CD4-positive, alpha-beta memory T cell (primary cell): ENCODE measurements at regions of chr3 and their contacts with region 1.

Region 1: DNA sequence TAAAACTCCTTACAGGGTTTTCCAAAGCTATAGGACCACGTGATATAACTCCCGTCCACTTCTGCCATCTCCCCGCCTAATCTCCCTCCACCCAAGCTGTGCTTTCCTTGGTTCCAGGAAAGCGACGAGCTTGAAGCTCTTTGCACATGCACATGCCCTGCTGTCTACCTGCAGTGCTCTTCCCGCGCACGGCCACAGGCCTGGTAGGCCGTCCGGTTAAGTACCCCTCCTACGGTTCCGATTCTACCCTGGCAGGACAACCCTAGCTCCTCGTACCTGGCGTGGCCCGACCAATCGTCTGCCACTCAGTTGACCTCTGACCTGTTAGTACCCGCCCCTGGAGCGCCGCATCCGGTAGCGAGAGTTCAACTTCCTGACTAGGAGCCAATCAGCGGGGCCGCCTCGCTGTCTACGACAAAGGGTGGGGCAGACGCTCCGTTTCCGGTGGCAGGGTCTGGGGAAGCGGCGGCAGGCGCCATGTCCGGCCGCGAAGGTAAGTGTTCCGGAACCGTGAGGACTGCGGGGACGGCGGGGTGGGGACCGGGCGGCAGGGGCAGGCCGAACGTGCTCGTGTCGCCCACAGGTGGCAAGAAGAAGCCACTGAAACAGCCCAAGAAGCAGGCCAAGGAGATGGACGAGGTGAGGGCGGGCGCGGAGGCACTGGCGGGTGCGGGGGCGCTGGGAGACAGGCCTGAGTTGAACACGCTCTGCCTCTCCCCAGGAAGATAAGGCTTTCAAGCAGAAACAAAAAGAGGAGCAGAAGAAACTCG is at the starts of genes CCDC51 and TMA7:
- DNase-seq: peak; percentile 96 to 99 (median 97)
- H3K4me3 ChIP-seq: peak within 1 kb of the TSS; percentile 93 to 95
- H3K4me3 Mint-ChIP-seq: peak within 1 kb of the TSS; percentile 86 to 99 (median 93)
- H3K27ac ChIP-seq: peak within 1 kb of the TSS; percentile 86
- H3K27ac Mint-ChIP-seq: peak within 1 kb of the TSS; percentile 91 to 100 (median 99)
- H3K4me1 ChIP-seq: peaks cover 32% of the 10 kb centered on the region
- H3K4me1 Mint-ChIP-seq: peaks cover 16 to 40% (median 32%) of the 10 kb centered on the region in 4 donors
- H3K27me3 ChIP-seq: no peaks in the 10 kb centered on the region
- H3K27me3 Mint-ChIP-seq: no peaks in the 10 kb centered on the region
- total RNA-seq, gene CCDC51: 5.1 to 5.4 TPM
- total RNA-seq, gene TMA7: 309 to 310 TPM

Region 2: DNA sequence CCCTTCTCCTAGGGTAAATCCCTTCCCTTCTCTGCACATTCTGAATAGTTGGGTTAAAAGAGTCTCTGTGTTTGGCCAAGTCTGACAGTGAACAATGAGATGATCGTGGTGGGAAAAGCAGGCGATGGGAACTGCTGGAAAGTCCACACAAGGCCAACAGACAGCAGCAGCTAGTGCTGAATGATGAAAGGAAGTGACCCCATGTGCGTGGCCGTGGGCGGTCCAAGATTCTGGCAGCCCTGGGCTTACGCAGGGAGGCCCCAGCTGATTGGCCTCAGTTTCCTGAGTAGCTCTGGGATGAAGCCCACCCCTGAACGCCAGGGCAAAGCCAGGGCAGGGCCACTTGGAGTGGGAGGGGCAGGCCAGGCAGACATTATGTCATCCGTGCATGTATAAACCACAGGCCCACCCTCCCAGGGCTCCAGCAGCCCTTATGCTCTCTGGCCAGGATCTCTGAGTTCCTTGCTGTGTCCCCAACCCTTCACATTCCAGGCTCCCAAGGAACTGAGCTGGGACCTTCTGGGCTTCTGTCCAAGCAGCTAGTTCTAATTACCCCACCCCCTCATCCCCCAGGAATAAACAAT is 309.6 kb before region 1 on chr3:
- CTCF ChIA-PET with region 1: no interaction called
- POLR2A ChIA-PET with region 1: no interaction called
- intact Hi-C with region 1: no loop called
- DNase-seq: no peak
- H3K4me3 ChIP-seq: no peak overlapping the region
- H3K4me3 Mint-ChIP-seq: no peak overlapping the region
- H3K27ac ChIP-seq: no peak overlapping the region
- H3K27ac Mint-ChIP-seq: no peak overlapping the region
- H3K4me1 ChIP-seq: no peaks in the 10 kb centered on the region
- H3K4me1 Mint-ChIP-seq: peaks cover 0 to 1% (median 0%) of the 10 kb centered on the region in 4 donors
- H3K27me3 ChIP-seq: no peaks in the 10 kb centered on the region
- H3K27me3 Mint-ChIP-seq: no peaks in the 10 kb centered on the region

Region 3: DNA sequence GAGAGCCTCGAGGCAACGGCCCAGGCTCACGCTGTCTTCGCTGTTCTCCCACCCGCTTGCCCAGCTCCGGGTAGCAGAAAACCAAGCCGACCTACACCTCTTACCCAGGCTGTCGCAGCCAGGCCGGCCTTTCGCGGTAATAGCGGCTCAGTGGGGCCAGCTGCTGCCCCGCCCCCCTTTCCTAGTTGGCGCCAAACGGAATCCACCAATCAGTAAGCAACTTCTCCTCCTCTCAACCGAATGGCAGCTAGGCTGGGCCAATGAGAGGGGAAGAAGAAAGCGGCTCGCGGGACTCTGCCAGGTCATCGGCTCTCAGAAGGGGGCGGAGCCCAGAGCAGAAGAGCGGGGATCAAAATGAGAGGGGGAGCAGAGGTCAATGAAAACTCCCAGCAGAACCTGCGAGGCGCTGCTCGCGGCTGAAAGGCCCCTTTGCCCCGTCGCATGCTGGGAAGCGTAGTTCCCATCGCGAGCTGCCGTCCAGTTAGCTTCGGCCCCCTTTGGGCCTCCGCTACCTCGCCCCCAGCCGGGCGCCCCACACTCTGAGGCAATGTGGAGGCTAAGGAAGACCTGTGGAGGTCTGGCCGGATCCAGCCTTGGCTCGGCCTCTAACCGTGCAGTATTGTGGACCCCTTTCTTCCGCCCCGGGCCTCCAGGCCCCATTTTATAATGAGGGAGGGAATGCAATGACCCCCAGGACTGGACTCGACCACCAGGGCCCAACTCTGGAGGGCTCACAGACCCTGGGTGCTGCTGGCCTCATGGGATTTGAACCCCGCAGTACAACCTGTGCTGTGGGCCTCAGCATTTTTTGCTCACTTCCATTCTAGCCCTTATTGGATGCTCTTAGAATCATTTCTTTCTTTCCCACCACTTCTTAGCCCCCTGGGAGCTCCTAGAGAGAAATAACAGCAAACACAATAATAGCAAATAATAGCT is 251.5 kb before region 1 on chr3 and contains the start of gene CDC25A:
- CTCF ChIA-PET with region 1: interaction called, 13 read pairs
- POLR2A ChIA-PET with region 1: interaction called, 4 read pairs
- intact Hi-C with region 1: no loop called
- DNase-seq: peak; percentile 88 to 97 (median 93)
- H3K4me3 ChIP-seq: peak within 1 kb of the TSS in 1 of 2 donors; percentile 95
- H3K4me3 Mint-ChIP-seq: peak within 1 kb of the TSS; percentile 92 to 96 (median 95)
- H3K27ac ChIP-seq: peak within 1 kb of the TSS; percentile 44
- H3K27ac Mint-ChIP-seq: peak within 1 kb of the TSS; percentile 38 to 90 (median 83)
- H3K4me1 ChIP-seq: peaks cover 12% of the 10 kb centered on the region
- H3K4me1 Mint-ChIP-seq: peaks cover 8 to 23% (median 15%) of the 10 kb centered on the region in 4 donors
- H3K27me3 ChIP-seq: no peaks in the 10 kb centered on the region
- H3K27me3 Mint-ChIP-seq: peaks cover 3 to 11% of the 10 kb centered on the region in 2 donors
- total RNA-seq, gene CDC25A: not detected

Region 4: GRCh38 chr3:48268381-48269183 is 171.4 kb before region 1 on chr3:
- CTCF ChIA-PET with region 1: interaction called, 53 read pairs
- POLR2A ChIA-PET with region 1: interaction called, 11 read pairs
- intact Hi-C with region 1: no loop called
- DNase-seq: peak; percentile 70 to 95 (median 82)
- H3K4me3 ChIP-seq: peak overlapping the region; percentile 30 to 31
- H3K4me3 Mint-ChIP-seq: peak overlapping the region; percentile 74 to 89 (median 84)
- H3K27ac ChIP-seq: peak overlapping the region; percentile 53
- H3K27ac Mint-ChIP-seq: peak overlapping the region; percentile 81 to 96 (median 92)
- H3K4me1 ChIP-seq: peaks cover 25% of the 10 kb centered on the region
- H3K4me1 Mint-ChIP-seq: peaks cover 24 to 42% (median 34%) of the 10 kb centered on the region in 4 donors
- H3K27me3 ChIP-seq: no peaks in the 10 kb centered on the region
- H3K27me3 Mint-ChIP-seq: no peaks in the 10 kb centered on the region

Region 5: GRCh38 chr3:48367201-48367600 is 72.8 kb before region 1 on chr3:
- CTCF ChIA-PET with region 1: no interaction called
- POLR2A ChIA-PET with region 1: no interaction called
- intact Hi-C with region 1: no loop called
- DNase-seq: no peak
- H3K4me3 ChIP-seq: no peak overlapping the region
- H3K4me3 Mint-ChIP-seq: no peak overlapping the region
- H3K27ac ChIP-seq: no peak overlapping the region
- H3K27ac Mint-ChIP-seq: no peak overlapping the region
- H3K4me1 ChIP-seq: no peaks in the 10 kb centered on the region
- H3K4me1 Mint-ChIP-seq: no peaks in the 10 kb centered on the region
- H3K27me3 ChIP-seq: no peaks in the 10 kb centered on the region
- H3K27me3 Mint-ChIP-seq: peaks cover 0 to 2% of the 10 kb centered on the region in 2 donors

Region 6: DNA sequence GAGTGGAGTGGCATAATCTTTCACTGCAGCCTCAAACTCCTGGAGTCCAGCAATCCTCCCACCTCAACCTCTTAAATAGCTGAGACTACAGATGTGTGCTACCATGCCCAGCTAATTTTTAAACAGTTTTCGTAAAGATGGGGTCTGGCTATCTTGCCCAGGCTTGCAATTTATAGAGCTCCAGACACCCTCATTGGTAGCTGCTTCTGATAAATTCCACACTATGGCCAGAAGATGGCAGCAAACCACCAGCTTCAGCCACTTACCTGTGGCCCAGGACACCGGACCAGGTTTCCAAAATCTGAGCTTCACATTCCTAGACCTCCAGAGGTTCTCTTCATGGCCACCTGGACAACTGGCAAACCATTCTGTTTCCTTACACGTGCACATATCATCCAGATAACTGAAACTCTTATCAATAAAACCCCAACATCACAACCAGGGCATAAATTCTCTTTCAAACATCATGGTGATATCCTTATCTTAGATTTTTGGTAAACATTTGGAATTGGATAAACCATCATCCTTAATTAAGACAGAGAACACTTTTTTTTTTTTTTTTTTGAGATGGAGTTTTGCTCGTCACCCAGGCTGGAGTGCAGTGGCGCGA is 39.1 kb before region 1 on chr3:
- CTCF ChIA-PET with region 1: interaction called, 381 read pairs
- POLR2A ChIA-PET with region 1: interaction called, 15 read pairs
- intact Hi-C with region 1: loop called (anchors 1 kb)
- DNase-seq: peak; percentile 67 to 77 (median 72)
- H3K4me3 ChIP-seq: no peak overlapping the region
- H3K4me3 Mint-ChIP-seq: no peak overlapping the region
- H3K27ac ChIP-seq: no peak overlapping the region
- H3K27ac Mint-ChIP-seq: peak overlapping the region in 2 of 7 donors; percentile 3 to 8
- H3K4me1 ChIP-seq: no peaks in the 10 kb centered on the region
- H3K4me1 Mint-ChIP-seq: peaks cover 0 to 2% (median 0%) of the 10 kb centered on the region in 4 donors
- H3K27me3 ChIP-seq: no peaks in the 10 kb centered on the region
- H3K27me3 Mint-ChIP-seq: peaks cover under 1 to 2% of the 10 kb centered on the region in 2 donors

Region 7: DNA sequence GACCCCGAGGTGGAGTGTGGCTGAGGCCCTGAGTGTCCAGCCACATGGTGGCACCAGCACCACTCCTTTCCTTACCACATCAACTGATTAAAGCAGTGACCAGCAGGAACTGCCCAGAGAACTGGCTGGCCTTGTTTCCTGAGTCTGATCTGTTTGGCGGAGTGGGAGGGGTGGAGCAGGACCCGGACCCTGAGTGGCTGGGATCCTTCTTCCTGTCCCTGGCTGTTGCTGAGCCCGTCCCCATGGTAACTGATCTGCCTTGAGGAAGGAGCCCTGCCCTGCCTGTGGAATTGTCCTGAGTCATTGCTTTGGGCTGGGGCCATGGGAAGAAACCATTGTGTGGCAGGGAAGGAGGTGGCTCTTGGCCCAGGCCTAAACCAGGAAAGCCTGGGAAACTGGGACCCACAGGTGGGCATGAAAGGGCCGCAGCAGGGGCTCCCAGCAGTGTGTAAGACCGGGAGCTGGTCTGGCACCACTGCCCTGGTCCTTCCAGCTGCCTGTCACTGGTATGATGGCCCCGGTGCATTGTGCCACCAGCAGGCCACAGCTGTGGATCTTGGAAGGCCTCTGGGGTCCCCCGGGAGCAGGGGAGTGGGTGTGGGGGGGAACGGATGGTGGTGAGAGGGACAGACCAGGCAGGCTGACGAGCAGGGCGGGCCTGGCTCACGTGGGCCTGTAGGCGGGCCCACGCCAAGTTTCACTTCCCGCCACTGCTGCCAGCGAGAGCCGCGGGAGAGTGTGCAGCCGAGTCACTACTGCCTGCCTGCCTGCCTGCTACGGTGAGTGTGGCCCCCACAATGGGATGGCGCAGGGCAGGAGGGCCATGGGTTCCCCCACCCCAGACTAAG is 25.8 kb after region 1 on chr3:
- CTCF ChIA-PET with region 1: interaction called, 83 read pairs
- POLR2A ChIA-PET with region 1: interaction called, 51 read pairs
- intact Hi-C with region 1: no loop called
- DNase-seq: peak; percentile 78 to 83 (median 79)
- H3K4me3 ChIP-seq: peak overlapping the region; percentile 69 to 94
- H3K4me3 Mint-ChIP-seq: peak overlapping the region; percentile 87 to 94 (median 90)
- H3K27ac ChIP-seq: peak overlapping the region; percentile 86
- H3K27ac Mint-ChIP-seq: peak overlapping the region; percentile 92 to 98 (median 96)
- H3K4me1 ChIP-seq: peaks cover 55% of the 10 kb centered on the region
- H3K4me1 Mint-ChIP-seq: peaks cover 30 to 58% (median 49%) of the 10 kb centered on the region in 4 donors
- H3K27me3 ChIP-seq: no peaks in the 10 kb centered on the region
- H3K27me3 Mint-ChIP-seq: no peaks in the 10 kb centered on the region

Region 8: DNA sequence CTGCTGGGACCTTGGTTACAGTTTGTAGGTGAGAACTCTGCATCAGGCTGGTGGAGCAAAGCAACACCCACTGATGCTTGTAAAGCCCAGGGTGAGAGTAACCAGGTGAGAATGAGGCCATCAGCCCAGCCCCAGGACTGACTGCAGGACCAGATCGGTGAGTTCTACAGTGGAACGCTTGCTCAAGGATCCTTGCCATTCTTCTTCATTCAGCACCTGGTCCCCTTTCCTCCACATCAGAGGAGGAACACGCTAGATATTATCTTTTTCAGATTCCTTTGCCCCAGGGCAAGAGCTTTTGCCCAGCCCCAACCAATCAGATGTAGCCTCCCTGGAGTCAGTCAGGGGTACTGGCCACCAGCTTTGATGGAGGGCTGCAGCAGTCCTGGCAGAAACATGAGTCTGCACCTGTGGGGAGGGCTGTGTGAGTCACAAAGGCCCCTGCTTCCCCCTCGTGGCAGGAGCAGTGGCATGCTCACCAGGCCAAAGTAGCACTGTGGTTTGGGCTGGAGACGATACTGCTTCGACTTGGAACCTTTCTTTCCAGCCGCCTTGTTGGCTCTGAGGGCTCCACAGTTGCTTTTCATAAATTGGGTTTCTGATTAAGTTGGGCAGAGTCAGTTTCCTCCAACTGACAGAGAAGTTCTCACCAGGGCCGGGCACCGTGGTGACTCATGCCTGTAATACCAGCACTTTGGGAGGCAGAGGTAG is 67.5 kb after region 1 on chr3:
- CTCF ChIA-PET with region 1: interaction called, 215 read pairs
- POLR2A ChIA-PET with region 1: interaction called, 25 read pairs
- intact Hi-C with region 1: loop called (anchors 1 kb)
- DNase-seq: peak; percentile 75 to 84 (median 77)
- H3K4me3 ChIP-seq: no peak overlapping the region
- H3K4me3 Mint-ChIP-seq: peak overlapping the region in 7 of 8 donors; percentile 42 to 77 (median 64)
- H3K27ac ChIP-seq: peak overlapping the region; percentile 27
- H3K27ac Mint-ChIP-seq: peak overlapping the region; percentile 83 to 92 (median 86)
- H3K4me1 ChIP-seq: peaks cover 62% of the 10 kb centered on the region
- H3K4me1 Mint-ChIP-seq: peaks cover 36 to 62% (median 50%) of the 10 kb centered on the region in 4 donors
- H3K27me3 ChIP-seq: no peaks in the 10 kb centered on the region
- H3K27me3 Mint-ChIP-seq: no peaks in the 10 kb centered on the region